Activated T-helper 1 cell treated with anti-CD3 and anti-CD28 coated beads, Interleukin-12 subunit alpha, Interleukin-12 subunit beta, Interleukin-2, Interleukin-4 antibody, amounts not matched to agents 30 ng/mL and 10 ng/mL and 1 ng/mL, durations not matched to agents 14 hours and 24 hours and 36 hours (primary cell): ENCODE measurements at regions of chr3 and their contacts with region 1.

Region 1: DNA sequence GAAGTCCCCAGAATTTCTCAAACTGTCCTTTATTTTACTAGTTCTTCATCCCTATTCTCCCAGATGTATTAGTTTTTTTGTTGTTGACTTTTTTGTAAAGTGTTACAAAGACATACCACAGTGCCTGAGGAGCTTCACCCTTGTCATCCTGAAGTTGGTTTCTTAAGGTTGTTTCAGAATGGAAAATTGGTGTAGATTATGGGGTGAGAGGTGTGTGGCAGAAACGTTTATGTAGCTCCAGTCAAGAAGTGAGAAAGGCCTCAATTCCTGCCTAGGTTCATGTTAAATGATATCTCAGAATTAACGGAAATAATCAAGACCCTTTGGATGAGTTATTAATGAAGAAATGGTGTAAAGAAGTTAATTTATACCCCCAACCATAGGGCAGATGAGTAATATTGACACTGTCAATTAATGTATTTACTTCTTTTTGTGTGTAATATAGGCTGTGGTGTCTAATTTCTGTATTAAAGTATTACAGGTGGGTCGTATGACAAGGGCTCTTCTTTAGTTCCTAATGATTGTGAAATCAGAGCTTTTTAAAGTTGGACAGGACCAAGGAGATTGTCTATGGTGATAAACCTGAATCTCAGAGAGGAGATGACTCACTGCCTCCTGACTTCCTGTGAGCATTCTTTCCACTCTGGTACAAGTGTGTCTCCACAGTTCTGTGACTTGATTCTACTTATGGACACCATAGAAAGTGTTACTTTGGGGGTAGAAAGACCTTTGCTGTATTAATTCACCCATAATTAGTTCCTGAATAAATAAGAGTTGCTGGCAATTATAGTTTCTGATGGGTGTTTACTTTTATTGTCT is 7.0 kb downstream of the EDEM1 start:
- DNase-seq: peak; percentile 54
- H3K4me3 Mint-ChIP-seq: peak overlapping the region; percentile 74
- H3K27ac Mint-ChIP-seq: peak overlapping the region; percentile 97
- H3K4me1 Mint-ChIP-seq: peaks cover 88% of the 10 kb centered on the region
- H3K27me3 Mint-ChIP-seq: no peaks in the 10 kb centered on the region

Region 2: GRCh38 chr3:4712143-4712542 is 482.4 kb before region 1 on chr3:
- intact Hi-C with region 1: loop called (anchors 2 kb)
- DNase-seq: no peak
- H3K4me3 Mint-ChIP-seq: no peak overlapping the region
- H3K27ac Mint-ChIP-seq: peak overlapping the region; percentile 32
- H3K4me1 Mint-ChIP-seq: peaks cover 61% of the 10 kb centered on the region
- H3K27me3 Mint-ChIP-seq: no peaks in the 10 kb centered on the region

Region 3: GRCh38 chr3:4804161-4805058 is 390.1 kb before region 1 on chr3:
- intact Hi-C with region 1: loop called (anchors 1 kb)
- DNase-seq: no peak
- H3K4me3 Mint-ChIP-seq: no peak overlapping the region
- H3K27ac Mint-ChIP-seq: peak overlapping the region; percentile 76
- H3K4me1 Mint-ChIP-seq: peaks cover 59% of the 10 kb centered on the region
- H3K27me3 Mint-ChIP-seq: no peaks in the 10 kb centered on the region

Region 4: DNA sequence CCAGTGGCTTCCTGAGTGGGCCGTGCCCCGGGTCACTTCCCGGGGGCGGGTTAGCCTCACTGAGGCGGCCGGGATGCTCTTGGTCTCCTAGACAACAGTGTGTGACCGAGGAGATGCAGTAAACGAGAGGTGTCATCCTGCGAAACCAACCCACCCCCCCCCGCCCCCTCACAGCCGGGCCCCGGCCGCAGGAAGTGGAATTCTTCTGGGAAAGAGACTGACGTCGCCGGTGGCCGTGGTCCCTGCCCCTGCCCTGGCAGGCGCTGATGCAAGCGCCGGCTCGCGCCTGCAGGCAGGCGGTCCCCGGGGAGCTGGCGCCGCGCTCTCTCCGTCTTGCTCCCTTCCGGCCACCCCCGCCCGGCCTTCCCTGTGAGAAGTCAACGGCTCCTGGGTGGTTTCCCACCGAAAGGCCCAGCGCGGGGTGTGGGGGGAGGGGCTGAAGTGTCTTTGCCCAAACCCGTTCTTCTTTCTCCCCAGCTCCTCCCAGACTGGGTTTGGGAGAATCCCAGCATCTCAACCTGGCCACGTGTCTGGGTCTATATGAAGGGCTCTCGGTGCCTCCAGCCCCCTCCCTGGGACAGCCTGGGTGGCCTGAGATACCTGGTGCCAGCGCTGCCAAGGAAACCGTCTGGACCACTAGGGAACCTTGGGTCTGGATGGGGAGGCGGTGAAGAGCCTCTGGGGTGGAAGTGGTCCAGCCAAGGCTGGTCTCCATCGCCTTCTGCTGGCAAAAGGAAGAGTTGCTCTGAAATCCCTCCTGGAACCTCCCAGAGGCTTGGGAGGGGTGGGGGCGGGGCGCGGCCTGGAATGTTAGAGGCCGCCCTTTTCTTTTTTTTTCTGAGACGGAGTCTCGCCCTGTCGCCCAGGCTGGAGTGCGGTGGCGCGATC is 168.0 kb before region 1 on chr3:
- intact Hi-C with region 1: loop called (anchors 1 kb)
- DNase-seq: peak; percentile 59
- H3K4me3 Mint-ChIP-seq: peak overlapping the region; percentile 81
- H3K27ac Mint-ChIP-seq: peak overlapping the region; percentile 95
- H3K4me1 Mint-ChIP-seq: peaks cover 70% of the 10 kb centered on the region
- H3K27me3 Mint-ChIP-seq: no peaks in the 10 kb centered on the region

Region 5: GRCh38 chr3:5136211-5136918 is 58.2 kb before region 1 on chr3:
- intact Hi-C with region 1: loop called (anchors 1 kb)
- DNase-seq: peak; percentile 7
- H3K4me3 Mint-ChIP-seq: no peak overlapping the region
- H3K27ac Mint-ChIP-seq: peak overlapping the region; percentile 4
- H3K4me1 Mint-ChIP-seq: peaks cover 39% of the 10 kb centered on the region
- H3K27me3 Mint-ChIP-seq: no peaks in the 10 kb centered on the region